ENCODE measurements at regions of chr10 and their contacts with region 1.

Region 1: DNA sequence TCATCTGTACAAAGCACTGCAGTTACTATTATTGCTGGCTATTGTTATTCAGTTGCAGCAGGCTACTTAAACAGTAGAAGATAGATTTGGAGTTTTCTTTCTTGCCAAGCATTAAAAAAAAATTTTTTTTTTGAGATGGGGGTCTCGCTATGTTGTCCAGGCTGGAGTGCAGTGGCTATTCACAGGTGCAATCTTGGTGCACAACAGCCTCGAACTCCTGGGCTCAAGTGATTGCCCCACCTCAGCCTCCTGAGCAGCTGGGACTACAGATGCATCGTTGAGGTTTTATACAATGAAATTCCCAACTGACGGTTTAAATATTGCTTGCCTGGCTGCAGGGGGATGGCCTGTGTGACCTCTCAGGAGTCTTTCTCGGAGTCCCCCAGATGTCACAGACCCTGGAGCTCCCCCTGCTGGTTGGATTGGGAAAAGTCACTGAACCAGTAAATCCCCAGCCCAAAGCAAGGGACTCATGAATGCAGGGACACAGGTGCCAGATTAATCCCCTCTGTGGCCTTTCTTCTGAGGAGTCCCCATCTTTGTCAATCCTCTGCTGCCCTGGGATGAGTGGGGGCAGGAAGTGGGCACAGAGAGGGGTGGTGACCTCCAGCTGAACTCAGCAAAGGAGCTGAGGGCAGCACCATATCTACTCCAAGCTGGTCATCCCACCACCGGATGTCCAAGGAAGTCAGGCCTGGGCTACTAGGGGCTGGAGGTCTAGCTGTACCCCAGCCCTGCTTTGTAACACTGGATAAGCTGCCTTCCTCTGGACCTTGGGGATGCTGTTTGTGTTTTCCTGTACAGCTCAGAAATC is 149.6 kb downstream of the C10orf105 start:
- DNase-seq: peak; percentile 81

Region 2: DNA sequence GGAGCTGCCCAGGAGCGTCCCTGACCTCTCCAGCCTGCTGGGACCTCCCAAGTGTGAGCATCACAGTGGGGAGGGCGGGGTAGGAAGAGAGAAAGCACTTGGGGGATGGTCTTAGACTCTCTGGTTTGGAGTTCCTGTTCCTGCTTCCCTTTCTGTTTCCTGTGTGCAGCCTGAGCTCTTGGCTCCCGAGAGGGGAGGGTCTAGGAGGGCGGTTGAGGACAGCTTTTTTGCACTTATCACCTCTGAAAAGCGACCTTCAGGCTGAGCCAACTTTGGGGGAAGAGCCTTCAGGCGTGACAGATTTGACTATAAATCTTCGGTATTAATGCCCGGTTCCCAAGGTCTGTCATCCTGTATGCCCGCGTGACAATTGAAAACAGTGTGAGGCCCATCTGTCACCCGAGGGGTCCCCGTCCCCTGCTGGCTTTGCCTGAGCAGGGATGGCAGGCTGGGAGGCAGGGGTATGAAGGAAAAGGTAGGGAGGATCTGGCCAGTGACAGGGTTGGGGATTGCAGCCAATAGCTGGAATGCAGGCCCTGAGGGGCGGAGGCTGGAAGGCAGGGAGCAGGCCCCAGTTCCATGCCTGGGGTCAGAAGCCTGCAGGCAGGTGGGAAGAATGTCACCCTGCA is 94.6 kb before region 1 on chr10:
- intact Hi-C with region 1: loop called (anchors 5 kb)
- DNase-seq: no peak

Region 3: GRCh38 chr10:71486484-71487114 is 83.4 kb before region 1 on chr10:
- intact Hi-C with region 1: loop called (anchors 5 kb)
- DNase-seq: no peak

Region 4: DNA sequence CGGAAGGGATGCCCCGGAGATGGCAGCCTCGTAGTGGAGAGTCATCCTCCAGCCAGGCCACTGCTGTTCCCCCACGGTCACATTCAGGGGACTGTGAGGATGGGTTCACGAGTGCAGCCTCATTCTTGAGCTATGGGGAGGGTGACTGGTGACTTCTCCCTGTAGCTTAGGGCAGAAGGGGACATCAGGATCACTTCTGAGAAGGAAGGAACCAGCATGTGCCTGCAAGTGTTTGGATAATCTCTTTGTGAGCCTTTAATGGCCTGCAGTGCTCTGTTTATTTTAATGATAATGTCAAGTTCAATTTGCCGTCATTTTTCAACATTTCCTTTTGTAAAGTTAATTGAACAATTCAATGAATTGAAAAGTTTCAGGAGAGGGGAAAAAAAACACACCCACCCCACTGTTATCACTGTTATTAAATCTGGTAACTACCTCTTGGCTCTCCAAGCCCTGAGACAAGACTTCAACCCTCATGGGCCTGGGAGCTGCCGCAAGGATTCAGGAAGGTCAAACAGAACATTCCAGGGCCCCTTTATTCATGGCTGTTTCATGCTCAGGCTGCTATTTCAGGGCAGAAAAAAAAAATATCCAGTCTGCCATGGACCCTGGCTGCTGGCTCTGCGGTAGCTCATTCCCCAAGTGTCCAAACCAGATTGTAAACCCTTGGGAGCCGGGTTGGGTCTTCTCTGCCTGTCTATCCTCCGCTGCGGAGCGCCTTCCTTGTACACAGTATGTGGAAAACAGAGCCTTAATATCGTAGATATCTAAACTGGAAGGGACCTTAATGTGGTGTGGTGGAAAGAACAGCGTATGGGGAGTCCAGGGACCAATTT is 72.8 kb before region 1 on chr10:
- intact Hi-C with region 1: no loop called
- DNase-seq: no peak

Region 5: DNA sequence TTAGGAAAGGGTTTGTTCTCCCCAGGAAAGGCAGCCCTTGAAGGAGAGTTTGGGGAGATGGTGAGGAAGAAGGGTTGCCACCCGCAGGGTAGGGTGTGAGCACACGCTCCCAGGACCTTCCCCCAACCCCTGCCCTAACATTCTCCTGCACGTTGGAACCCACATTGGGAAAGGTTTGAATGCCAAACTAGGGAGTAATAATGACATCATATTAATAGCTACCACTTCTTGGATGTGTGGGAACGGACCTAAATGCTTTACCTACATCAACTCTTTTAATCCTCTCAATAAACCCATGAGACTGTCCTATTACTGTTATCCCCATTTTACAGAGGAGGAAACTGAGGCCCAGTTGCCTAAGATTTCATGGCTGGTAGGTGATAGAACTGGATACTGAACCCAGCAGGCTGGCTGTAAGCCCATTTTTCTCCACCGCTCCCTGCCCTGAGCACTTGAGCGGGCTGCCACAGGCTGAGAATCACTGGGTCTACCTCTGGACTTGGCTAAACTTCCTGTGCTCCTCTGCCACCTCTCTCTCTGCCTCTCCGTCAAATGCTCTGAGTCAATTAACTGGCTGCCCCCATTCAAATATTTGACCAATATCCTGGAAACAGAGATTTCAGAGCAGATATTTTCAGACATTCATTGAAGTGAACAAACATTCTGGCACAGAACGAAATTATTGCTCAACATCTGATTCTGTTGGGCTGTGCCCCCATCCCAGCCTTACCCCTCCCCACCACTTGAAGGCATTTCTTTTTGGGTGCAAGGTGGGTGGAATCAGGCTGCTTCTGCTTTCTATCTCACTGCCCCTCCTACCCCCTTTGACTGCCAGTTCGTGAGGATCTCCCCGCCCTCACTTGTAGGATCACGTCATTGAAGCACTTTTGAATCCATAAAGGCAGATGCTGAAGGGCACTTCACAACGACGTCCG is 19.9 kb after region 1 on chr10:
- intact Hi-C with region 1: no loop called
- DNase-seq: no peak

Region 6: GRCh38 chr10:71812016-71812912 is 242.3 kb after region 1 on chr10:
- intact Hi-C with region 1: loop called (anchors 10 kb)
- DNase-seq: peak; percentile 93